Activated T-helper 2 cell treated with anti-CD3 and anti-CD28 coated beads, Interferon-gamma antibody, Interleukin-2, Interleukin-4, amounts not matched to agents 10 μg/mL and 5 μg/mL and 100 μg/mL, durations not matched to agents 14 hours and 24 hours and 36 hours (primary cell): ENCODE measurements at regions of chr1 and their contacts with region 1.

Region 1: GRCh38 chr1:200488375-200489165 is 78.7 kb upstream of the ZNF281 start:
- DNase-seq: no peak
- H3K4me3 Mint-ChIP-seq: no peak overlapping the region
- H3K27ac Mint-ChIP-seq: no peak overlapping the region
- H3K4me1 Mint-ChIP-seq: peaks cover 11% of the 10 kb centered on the region
- H3K27me3 Mint-ChIP-seq: peaks cover 37% of the 10 kb centered on the region

Region 2: GRCh38 chr1:199684686-199685273 is 803.8 kb before region 1 on chr1:
- intact Hi-C with region 1: loop called (anchors 10 kb)
- DNase-seq: no peak
- H3K4me3 Mint-ChIP-seq: no peak overlapping the region
- H3K27ac Mint-ChIP-seq: no peak overlapping the region
- H3K4me1 Mint-ChIP-seq: no peaks in the 10 kb centered on the region
- H3K27me3 Mint-ChIP-seq: peaks cover 12% of the 10 kb centered on the region

Region 3: DNA sequence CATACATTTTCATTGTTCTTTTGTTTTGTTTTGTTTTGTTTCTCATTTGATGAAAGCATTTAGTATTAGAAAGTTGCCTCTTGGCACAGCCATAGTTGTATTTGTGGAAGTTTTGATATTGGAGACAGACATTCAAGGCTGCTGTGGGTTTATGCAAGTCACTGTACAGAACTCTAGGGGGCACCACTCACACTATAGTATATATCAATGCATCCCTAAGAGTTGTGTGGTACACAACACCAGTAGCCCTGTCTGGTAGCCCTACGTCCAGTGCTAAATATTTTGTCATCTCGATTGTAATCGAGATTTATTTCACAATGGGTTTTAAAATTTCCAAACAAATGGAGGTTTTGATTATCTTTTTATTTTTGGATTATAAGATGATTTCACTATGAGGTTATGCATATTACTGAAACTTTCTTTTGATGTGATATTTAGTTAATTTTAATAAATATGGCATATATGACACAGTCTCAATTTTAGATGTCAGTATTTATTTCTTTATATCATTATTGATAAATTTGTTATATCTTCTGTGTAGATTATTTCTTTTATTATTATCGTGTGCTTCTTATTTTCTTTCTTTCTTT is 348.8 kb before region 1 on chr1:
- intact Hi-C with region 1: loop called (anchors 2 kb)
- DNase-seq: no peak
- H3K4me3 Mint-ChIP-seq: no peak overlapping the region
- H3K27ac Mint-ChIP-seq: no peak overlapping the region
- H3K4me1 Mint-ChIP-seq: peaks cover 8% of the 10 kb centered on the region
- H3K27me3 Mint-ChIP-seq: peaks cover 27% of the 10 kb centered on the region

Region 4: GRCh38 chr1:200279810-200280411 is 208.7 kb before region 1 on chr1:
- intact Hi-C with region 1: loop called (anchors 1 kb)
- DNase-seq: no peak
- H3K4me3 Mint-ChIP-seq: no peak overlapping the region
- H3K27ac Mint-ChIP-seq: no peak overlapping the region
- H3K4me1 Mint-ChIP-seq: no peaks in the 10 kb centered on the region
- H3K27me3 Mint-ChIP-seq: peaks cover 19% of the 10 kb centered on the region

Region 5: DNA sequence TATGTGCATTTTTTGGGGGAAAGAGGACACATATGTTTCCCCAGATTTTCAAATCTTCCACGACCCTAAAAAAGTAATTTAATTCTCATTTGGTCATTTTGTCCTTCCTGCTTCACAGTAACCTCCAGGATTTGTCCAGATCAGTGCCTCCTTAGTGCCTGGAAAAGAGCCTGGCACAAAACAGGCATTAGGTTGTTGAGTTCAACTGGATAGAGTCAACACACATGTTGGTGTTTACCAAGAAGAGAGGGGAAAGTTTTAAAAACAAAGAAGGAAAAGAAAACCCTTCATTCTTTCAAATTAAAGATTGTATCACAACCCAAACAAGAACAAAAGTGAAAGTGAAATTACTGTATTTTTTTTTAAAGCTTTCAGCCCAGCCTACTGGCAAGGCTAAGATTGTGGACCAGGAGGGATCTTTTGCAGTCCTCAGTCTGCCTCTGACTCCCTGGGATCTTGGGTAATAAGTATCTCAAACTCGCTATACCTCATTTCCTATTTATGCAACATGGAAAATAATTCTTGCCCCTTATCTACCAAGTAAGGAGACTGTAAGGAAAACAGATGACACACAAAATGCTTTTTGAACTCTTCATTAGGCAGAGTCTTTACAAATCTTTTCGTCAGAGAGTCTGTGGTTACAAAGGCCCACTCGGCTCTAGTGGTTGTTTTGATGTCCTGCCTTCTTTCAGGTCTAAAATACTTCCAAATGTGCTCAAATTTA is 136.6 kb before region 1 on chr1:
- intact Hi-C with region 1: loop called (anchors 1 kb)
- DNase-seq: no peak
- H3K4me3 Mint-ChIP-seq: peak overlapping the region; percentile 34
- H3K27ac Mint-ChIP-seq: peak overlapping the region; percentile 24
- H3K4me1 Mint-ChIP-seq: peaks cover 44% of the 10 kb centered on the region
- H3K27me3 Mint-ChIP-seq: peaks cover 5% of the 10 kb centered on the region

Region 6: GRCh38 chr1:200448034-200448762 is 40.4 kb before region 1 on chr1:
- intact Hi-C with region 1: loop called (anchors 1 kb)
- DNase-seq: no peak
- H3K4me3 Mint-ChIP-seq: peak overlapping the region; percentile 6
- H3K27ac Mint-ChIP-seq: peak overlapping the region; percentile 92
- H3K4me1 Mint-ChIP-seq: peaks cover 38% of the 10 kb centered on the region
- H3K27me3 Mint-ChIP-seq: peaks cover 5% of the 10 kb centered on the region